HEK293T (cell line): ENCODE measurements at regions of chr18 and their contacts with region 1.

Region 1: DNA sequence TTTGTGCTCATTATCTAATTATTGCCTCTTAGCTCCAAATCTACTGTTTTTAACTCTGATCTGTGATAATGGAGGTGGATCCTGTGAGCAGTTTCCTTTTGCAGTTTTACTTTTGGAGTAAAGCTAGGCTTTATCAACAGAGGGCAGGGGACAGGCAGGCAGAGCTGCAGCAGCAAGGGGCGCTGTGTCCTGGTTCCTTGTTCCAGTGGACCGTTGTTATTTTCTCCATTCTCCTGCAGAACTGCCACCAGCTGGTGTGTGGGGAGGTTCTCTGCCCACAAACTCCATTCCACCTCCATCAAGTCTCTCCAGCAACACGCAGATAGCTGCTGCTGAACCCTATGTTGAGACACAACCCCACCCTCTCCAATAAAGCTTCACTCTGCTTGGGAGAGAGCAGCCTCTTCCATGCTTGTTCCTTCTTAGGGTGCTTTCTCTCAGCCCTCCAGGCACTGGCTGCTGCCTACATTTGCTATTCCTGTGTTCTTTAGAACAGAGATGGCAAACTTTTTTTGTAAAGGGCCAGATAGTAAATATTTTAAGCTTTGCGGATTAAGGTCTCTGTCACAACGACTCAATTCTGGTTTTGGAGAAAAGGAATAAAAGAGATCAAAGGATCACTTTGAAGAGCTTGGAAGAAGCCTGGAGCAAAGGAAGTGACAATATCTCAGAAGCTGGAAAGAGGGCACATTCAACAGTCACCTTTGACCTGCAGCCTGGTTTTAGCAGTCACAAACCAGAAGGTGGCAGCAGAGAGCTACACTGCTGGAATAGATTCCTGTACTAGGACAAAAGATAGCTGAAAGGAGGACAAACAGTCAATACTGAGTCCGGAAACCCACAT is 208.8 kb downstream of the CCDC178 start:
- DNase-seq: peak; percentile 85

Region 2: GRCh38 chr18:33210575-33211189 is 21.0 kb before region 1 on chr18:
- CTCF ChIA-PET with region 1: interaction called, 25 read pairs
- POLR2A ChIA-PET with region 1: no interaction called
- DNase-seq: peak; percentile 62

Region 3: DNA sequence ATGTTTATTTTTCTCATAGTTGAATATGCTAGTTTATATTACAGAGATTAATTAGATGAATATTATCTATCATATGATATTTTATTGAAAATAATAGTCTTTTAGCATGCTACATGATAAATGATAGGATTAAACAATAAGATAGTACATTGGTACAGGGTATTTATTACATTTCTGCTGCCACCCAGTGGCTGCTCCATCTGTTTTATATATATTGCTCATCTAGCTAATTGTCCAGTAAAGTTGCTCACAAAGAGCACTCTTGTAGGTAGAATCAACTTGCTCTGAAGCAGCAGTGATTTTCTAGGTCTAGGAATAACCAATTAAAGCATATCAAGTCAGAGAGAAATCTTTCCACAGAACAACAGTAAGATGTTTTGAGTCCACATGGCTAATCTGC is 529.7 kb after region 1 on chr18:
- CTCF ChIA-PET with region 1: interaction called, 11 read pairs
- POLR2A ChIA-PET with region 1: no interaction called
- DNase-seq: peak; percentile 45